ENCODE measurements at regions of chr12 and their contacts with region 1.

Region 1: DNA sequence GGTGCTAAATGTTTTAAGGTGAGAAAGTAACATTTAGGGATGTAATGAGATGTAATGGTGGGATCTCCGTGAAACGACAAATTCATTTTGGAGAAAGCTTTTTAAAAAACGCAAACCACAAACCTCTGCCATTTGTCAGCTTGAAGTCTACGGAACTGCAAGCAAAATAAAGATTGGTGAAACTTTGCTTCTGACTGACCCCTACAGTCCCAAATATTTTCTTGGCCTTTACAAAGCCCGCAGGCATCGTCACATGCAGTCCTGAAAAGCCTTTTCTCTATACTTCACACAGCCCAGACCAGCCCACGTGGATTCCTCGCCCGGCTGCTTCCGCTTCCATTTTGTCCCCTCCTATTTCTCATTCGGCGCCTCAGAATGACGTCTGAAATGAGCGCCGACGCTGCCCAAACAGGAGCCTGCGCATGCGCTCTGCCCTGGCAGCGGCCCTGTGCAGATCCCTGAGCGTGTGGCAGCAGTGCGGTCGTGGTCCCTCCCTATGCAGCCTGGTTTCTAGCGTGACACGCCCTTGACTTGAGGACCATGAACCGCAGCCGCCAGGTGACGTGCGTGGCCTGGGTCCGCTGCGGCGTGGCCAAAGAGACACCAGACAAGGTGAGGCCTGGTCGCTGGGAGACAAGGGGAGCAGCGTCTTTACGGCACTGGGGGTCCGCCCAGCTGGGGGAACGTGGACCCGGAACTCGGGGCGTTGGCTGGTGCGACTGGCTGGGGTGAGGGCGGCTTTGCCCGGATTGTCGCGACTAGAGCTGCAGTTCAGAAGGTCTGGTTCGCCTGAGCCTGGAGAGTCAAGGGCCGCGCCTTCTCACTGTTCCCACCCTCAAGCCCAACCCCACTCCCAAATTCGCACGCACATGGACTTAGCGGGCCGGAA is at the start of gene PWP1:
- DNase-seq: peak; percentile 90 to 98 (median 96)
- ATAC-seq: peak; percentile 84
- H3K4me3 ChIP-seq: peak within 1 kb of the TSS; percentile 75 to 82
- H3K4me3 Mint-ChIP-seq: peak within 1 kb of the TSS; percentile 98
- H3K27ac ChIP-seq: peak within 1 kb of the TSS; percentile 74 to 90
- H3K27ac Mint-ChIP-seq: peak within 1 kb of the TSS; percentile 98
- H3K4me1 ChIP-seq: peaks cover 20% of the 10 kb centered on the region
- H3K4me1 Mint-ChIP-seq: peaks cover 34% of the 10 kb centered on the region
- H3K27me3 ChIP-seq: no peaks in the 10 kb centered on the region
- H3K27me3 Mint-ChIP-seq: no peaks in the 10 kb centered on the region
- CTCF ChIP-seq: no peak
- total RNA-seq, gene PWP1: 27.7 to 28.8 TPM

Region 2: GRCh38 chr12:106357549-106358395 is 1327.8 kb before region 1 on chr12 and contains the start of gene POLR3B:
- CTCF ChIA-PET with region 1: no interaction called
- POLR2A ChIA-PET with region 1: no interaction called
- intact Hi-C with region 1: loop called in 1 of 2 experiments (anchors 2 kb)
- DNase-seq: peak; percentile 93 to 98 (median 96)
- ATAC-seq: peak; percentile 92
- H3K4me3 ChIP-seq: peak within 1 kb of the TSS; percentile 97
- H3K4me3 Mint-ChIP-seq: peak within 1 kb of the TSS; percentile 91
- H3K27ac ChIP-seq: peak within 1 kb of the TSS; percentile 84 to 90
- H3K27ac Mint-ChIP-seq: peak within 1 kb of the TSS; percentile 90
- H3K4me1 ChIP-seq: peaks cover 13% of the 10 kb centered on the region
- H3K4me1 Mint-ChIP-seq: peaks cover 18% of the 10 kb centered on the region
- H3K27me3 ChIP-seq: no peaks in the 10 kb centered on the region
- H3K27me3 Mint-ChIP-seq: no peaks in the 10 kb centered on the region
- CTCF ChIP-seq: peak; percentile 79
- total RNA-seq, gene POLR3B: 2.5 to 2.6 TPM

Region 3: DNA sequence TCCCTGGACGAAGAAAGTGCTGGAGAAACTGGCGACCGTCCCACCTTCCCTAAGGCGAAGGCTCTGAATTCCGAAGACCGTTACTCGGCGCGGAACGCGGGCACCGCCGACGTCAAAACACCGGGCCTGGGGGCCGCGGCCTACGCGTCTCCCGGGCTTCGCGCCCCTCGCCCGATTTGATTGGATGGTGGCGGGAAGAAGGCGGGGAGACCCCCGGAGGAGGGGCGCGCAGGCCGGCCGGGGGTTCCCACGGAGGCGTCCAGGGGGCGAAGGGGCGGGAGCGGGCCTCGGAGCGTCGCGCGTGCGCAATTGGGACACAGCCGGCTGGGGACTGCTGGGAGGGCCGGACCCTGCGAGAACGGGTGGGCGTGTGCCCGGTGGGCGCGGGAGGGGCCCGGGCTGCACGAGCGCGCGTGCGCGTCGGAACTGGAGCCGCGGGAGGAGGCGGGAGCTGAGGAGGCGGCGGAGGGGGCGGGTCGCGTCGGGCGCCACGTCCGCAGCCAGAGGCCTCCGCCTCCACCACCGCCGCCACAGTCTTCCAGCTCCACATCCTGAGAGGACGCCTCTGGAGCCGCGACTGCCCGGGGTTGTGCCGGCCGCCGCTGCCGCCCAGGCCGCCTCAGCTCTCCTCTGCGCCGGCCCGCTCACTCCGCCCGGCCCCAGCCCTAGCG is 730.1 kb before region 1 on chr12 and contains the start of gene TMEM263:
- CTCF ChIA-PET with region 1: no interaction called
- POLR2A ChIA-PET with region 1: interaction called, 3 read pairs
- intact Hi-C with region 1: loop called in 1 of 2 experiments (anchors 2 kb)
- DNase-seq: peak; percentile 83 to 98 (median 93)
- ATAC-seq: peak; percentile 81
- H3K4me3 ChIP-seq: peak within 1 kb of the TSS; percentile 87 to 93
- H3K4me3 Mint-ChIP-seq: peak within 1 kb of the TSS; percentile 97
- H3K27ac ChIP-seq: peak within 1 kb of the TSS; percentile 76 to 90
- H3K27ac Mint-ChIP-seq: peak within 1 kb of the TSS; percentile 96
- H3K4me1 ChIP-seq: peaks cover 18% of the 10 kb centered on the region
- H3K4me1 Mint-ChIP-seq: peaks cover 41% of the 10 kb centered on the region
- H3K27me3 ChIP-seq: no peaks in the 10 kb centered on the region
- H3K27me3 Mint-ChIP-seq: no peaks in the 10 kb centered on the region
- CTCF ChIP-seq: no peak
- total RNA-seq, gene TMEM263: 34.3 to 35.3 TPM

Region 4: GRCh38 chr12:107736914-107737313 is 51.3 kb after region 1 on chr12:
- CTCF ChIA-PET with region 1: no interaction called
- POLR2A ChIA-PET with region 1: no interaction called
- intact Hi-C with region 1: no loop called
- DNase-seq: peak in 3 of 9 experiments; percentile 15 to 45 (median 20)
- ATAC-seq: peak; percentile 46
- H3K4me3 ChIP-seq: no peak overlapping the region
- H3K4me3 Mint-ChIP-seq: no peak overlapping the region
- H3K27ac ChIP-seq: no peak overlapping the region
- H3K27ac Mint-ChIP-seq: peak overlapping the region; percentile 50
- H3K4me1 ChIP-seq: no peaks in the 10 kb centered on the region
- H3K4me1 Mint-ChIP-seq: peaks cover 11% of the 10 kb centered on the region
- H3K27me3 ChIP-seq: no peaks in the 10 kb centered on the region
- H3K27me3 Mint-ChIP-seq: no peaks in the 10 kb centered on the region
- CTCF ChIP-seq: no peak

Region 5: GRCh38 chr12:108633534-108634248 is 948.1 kb after region 1 on chr12 and contains the start of gene SELPLG:
- CTCF ChIA-PET with region 1: no interaction called
- POLR2A ChIA-PET with region 1: no interaction called
- intact Hi-C with region 1: loop called in 1 of 2 experiments (anchors 10 kb)
- DNase-seq: peak; percentile 77 to 97 (median 88)
- ATAC-seq: peak; percentile 60
- H3K4me3 ChIP-seq: peak within 1 kb of the TSS; percentile 71 to 95
- H3K4me3 Mint-ChIP-seq: peak within 1 kb of the TSS; percentile 100
- H3K27ac ChIP-seq: peak within 1 kb of the TSS; percentile 91 to 92
- H3K27ac Mint-ChIP-seq: peak within 1 kb of the TSS; percentile 100
- H3K4me1 ChIP-seq: peaks cover 73% of the 10 kb centered on the region
- H3K4me1 Mint-ChIP-seq: peaks cover 71% of the 10 kb centered on the region
- H3K27me3 ChIP-seq: no peaks in the 10 kb centered on the region
- H3K27me3 Mint-ChIP-seq: no peaks in the 10 kb centered on the region
- CTCF ChIP-seq: peak; percentile 23
- total RNA-seq, gene SELPLG: 30.4 to 32.3 TPM

Region 6: GRCh38 chr12:108856428-108857157 is 1171.0 kb after region 1 on chr12:
- CTCF ChIA-PET with region 1: no interaction called
- POLR2A ChIA-PET with region 1: no interaction called
- intact Hi-C with region 1: loop called in 1 of 2 experiments (anchors 10 kb)
- DNase-seq: peak; percentile 27 to 92 (median 64)
- ATAC-seq: peak; percentile 70
- H3K4me3 ChIP-seq: peak overlapping the region; percentile 58 to 71
- H3K4me3 Mint-ChIP-seq: peak overlapping the region; percentile 98
- H3K27ac ChIP-seq: peak overlapping the region; percentile 54 to 77
- H3K27ac Mint-ChIP-seq: peak overlapping the region; percentile 97
- H3K4me1 ChIP-seq: peaks cover 27% of the 10 kb centered on the region
- H3K4me1 Mint-ChIP-seq: peaks cover 46% of the 10 kb centered on the region
- H3K27me3 ChIP-seq: peaks cover 0 to 2% of the 10 kb centered on the region in 2 experiments
- H3K27me3 Mint-ChIP-seq: no peaks in the 10 kb centered on the region
- CTCF ChIP-seq: no peak